Activated naive CD4-positive, alpha-beta T cell treated with anti-CD3 and anti-CD28 coated beads for 36 hours (primary cell): ENCODE measurements at regions of chr5 and their contacts with region 1.

Region 1: DNA sequence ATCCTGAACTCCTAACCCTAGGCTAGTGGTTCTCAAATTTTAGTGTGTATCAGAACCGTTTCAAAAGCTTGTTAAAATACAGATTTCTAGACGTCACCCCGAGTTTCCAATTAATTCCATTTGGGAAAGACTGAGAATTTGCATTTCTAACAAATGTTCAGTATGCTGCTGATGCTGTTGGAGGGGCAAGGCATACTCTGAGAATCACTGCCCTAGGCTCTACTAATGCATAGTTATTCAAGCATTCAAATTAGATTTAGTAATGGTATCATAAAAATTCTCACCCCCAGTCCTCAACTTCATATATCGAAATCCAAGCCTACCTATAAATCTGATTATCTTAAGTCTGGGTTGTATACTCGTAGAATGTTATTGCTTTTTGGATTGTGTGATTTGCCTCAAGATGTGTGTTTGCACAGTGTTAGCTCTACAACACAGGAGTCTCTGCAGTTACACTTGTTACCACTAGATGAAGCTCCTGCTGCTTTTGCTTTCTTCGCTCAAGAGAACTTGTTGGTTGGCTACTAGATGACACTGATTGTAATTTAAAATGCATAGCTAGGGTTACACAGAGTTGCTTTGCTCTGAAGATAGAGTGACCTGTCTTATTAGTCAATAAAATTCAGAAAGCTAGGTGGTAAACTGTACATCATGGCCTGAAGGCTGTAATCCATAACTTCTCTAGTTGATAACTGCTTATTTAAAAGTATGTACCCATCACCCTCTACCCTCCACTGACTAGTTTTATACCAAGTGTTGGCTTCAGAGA is 7.5 kb upstream of the ERAP2 start:
- DNase-seq: peak; percentile 39
- H3K4me3 Mint-ChIP-seq: no peak overlapping the region
- H3K27ac Mint-ChIP-seq: peak overlapping the region; percentile 93
- H3K4me1 Mint-ChIP-seq: peaks cover 54% of the 10 kb centered on the region
- H3K27me3 Mint-ChIP-seq: no peaks in the 10 kb centered on the region

Region 2: GRCh38 chr5:95870105-95870672 is 998.6 kb before region 1 on chr5:
- CTCF ChIA-PET with region 1: no interaction called
- intact Hi-C with region 1: loop called (anchors 2 kb)
- DNase-seq: peak; percentile 65
- H3K4me3 Mint-ChIP-seq: peak overlapping the region; percentile 68
- H3K27ac Mint-ChIP-seq: peak overlapping the region; percentile 99
- H3K4me1 Mint-ChIP-seq: peaks cover 59% of the 10 kb centered on the region
- H3K27me3 Mint-ChIP-seq: no peaks in the 10 kb centered on the region

Region 3: GRCh38 chr5:96752341-96753016 is 116.3 kb before region 1 on chr5:
- CTCF ChIA-PET with region 1: interaction called, 9 read pairs
- intact Hi-C with region 1: loop called (anchors 2 kb)
- DNase-seq: peak; percentile 54
- H3K4me3 Mint-ChIP-seq: no peak overlapping the region
- H3K27ac Mint-ChIP-seq: peak overlapping the region; percentile 25
- H3K4me1 Mint-ChIP-seq: peaks cover 25% of the 10 kb centered on the region
- H3K27me3 Mint-ChIP-seq: no peaks in the 10 kb centered on the region

Region 4: DNA sequence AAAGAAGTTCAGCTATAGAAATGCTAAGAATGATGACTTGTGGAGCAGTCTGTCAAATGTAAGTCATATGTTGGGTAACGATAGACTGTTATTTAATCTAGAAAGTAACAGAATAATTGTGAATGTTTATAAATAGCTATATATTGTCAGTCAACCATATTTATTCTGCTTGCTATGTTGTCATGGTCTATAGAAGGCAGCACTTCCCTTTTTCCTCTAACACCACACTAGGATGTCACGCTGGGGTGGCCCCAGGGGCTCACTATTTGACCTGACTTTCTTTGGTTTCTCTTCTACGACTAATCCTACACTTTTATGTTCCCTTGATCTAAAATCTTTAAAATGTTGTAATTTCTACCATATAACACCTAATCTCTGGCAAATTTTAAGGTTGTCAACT is 28.0 kb after region 1 on chr5:
- CTCF ChIA-PET with region 1: interaction called, 19 read pairs
- intact Hi-C with region 1: loop called (anchors 1 kb)
- DNase-seq: peak; percentile 79
- H3K4me3 Mint-ChIP-seq: peak overlapping the region; percentile 79
- H3K27ac Mint-ChIP-seq: peak overlapping the region; percentile 98
- H3K4me1 Mint-ChIP-seq: peaks cover 62% of the 10 kb centered on the region
- H3K27me3 Mint-ChIP-seq: no peaks in the 10 kb centered on the region

Region 5: GRCh38 chr5:96957254-96958049 is 88.7 kb after region 1 on chr5:
- CTCF ChIA-PET with region 1: interaction called, 7 read pairs
- intact Hi-C with region 1: loop called (anchors 1 kb)
- DNase-seq: peak; percentile 73
- H3K4me3 Mint-ChIP-seq: peak overlapping the region; percentile 64
- H3K27ac Mint-ChIP-seq: peak overlapping the region; percentile 86
- H3K4me1 Mint-ChIP-seq: peaks cover 77% of the 10 kb centered on the region
- H3K27me3 Mint-ChIP-seq: no peaks in the 10 kb centered on the region

Region 6: DNA sequence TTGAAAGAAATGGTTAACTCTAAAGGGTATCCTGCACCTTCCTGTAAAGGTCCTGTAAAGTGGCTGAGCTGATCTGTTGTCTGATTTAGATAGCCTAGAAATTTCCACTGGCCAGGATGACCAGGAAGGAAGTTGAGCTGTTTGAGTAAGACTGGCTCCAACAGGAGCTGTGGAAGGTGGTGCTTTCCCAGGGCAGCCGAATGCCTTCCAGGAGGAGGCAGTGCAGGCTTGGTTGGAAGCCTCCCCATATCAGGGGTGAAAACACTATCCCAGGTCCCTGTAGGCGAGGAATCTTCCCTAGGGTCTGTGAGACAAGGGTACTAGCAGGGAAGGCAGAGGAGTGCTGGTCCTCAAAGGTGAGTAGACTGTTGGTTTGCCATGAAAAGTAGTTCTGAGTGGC is 175.3 kb after region 1 on chr5:
- CTCF ChIA-PET with region 1: interaction called, 18 read pairs
- intact Hi-C with region 1: loop called (anchors 1 kb)
- DNase-seq: no peak
- H3K4me3 Mint-ChIP-seq: no peak overlapping the region
- H3K27ac Mint-ChIP-seq: no peak overlapping the region
- H3K4me1 Mint-ChIP-seq: no peaks in the 10 kb centered on the region
- H3K27me3 Mint-ChIP-seq: no peaks in the 10 kb centered on the region

Region 7: GRCh38 chr5:97162045-97162444 is 293.3 kb after region 1 on chr5:
- CTCF ChIA-PET with region 1: interaction called, 85 read pairs
- intact Hi-C with region 1: loop called (anchors 1 kb)
- DNase-seq: peak; percentile 76
- H3K4me3 Mint-ChIP-seq: no peak overlapping the region
- H3K27ac Mint-ChIP-seq: no peak overlapping the region
- H3K4me1 Mint-ChIP-seq: peaks cover 17% of the 10 kb centered on the region
- H3K27me3 Mint-ChIP-seq: no peaks in the 10 kb centered on the region

Region 8: GRCh38 chr5:98173334-98173733 is 1304.5 kb after region 1 on chr5:
- CTCF ChIA-PET with region 1: no interaction called
- intact Hi-C with region 1: no loop called
- DNase-seq: no peak
- H3K4me3 Mint-ChIP-seq: no peak overlapping the region
- H3K27ac Mint-ChIP-seq: no peak overlapping the region
- H3K4me1 Mint-ChIP-seq: no peaks in the 10 kb centered on the region
- H3K27me3 Mint-ChIP-seq: peaks cover 3% of the 10 kb centered on the region